ENCODE measurements at regions of chr1 and their contacts with region 1.

Region 1: GRCh38 chr1:200774735-200775444 is 36.2 kb downstream of the CAMSAP2 start:
- DNase-seq: no peak
- ATAC-seq: peak; percentile 86
- H3K4me3 ChIP-seq: peak overlapping the region; percentile 29; the same call in 1 of the 2 replicates
- H3K27ac ChIP-seq: peak overlapping the region; percentile 74
- H3K4me1 ChIP-seq: peaks cover 24% of the 10 kb centered on the region
- H3K27me3 ChIP-seq: no peaks in the 10 kb centered on the region
- CTCF ChIP-seq: no peak
- EP300 ChIP-seq: peak in 1 of 2 experiments; percentile 37; a peak in 1 of 4 replicates
- POLR2A ChIP-seq: no peak
- RAD21 ChIP-seq: no peak

Region 2: GRCh38 chr1:199353906-199354305 is 1421.0 kb before region 1 on chr1:
- CTCF ChIA-PET with region 1: no interaction called
- POLR2A ChIA-PET with region 1: no interaction called
- RAD21 ChIA-PET with region 1: no interaction called
- SMC1A ChIA-PET with region 1: no interaction called
- in situ Hi-C with region 1: no loop called
- intact Hi-C with region 1: no loop called
- DNase-seq: no peak
- ATAC-seq: no peak
- H3K4me3 ChIP-seq: no peak overlapping the region
- H3K27ac ChIP-seq: no peak overlapping the region
- H3K4me1 ChIP-seq: no peaks in the 10 kb centered on the region
- H3K27me3 ChIP-seq: no peaks in the 10 kb centered on the region
- CTCF ChIP-seq: no peak
- EP300 ChIP-seq: no peak
- POLR2A ChIP-seq: no peak
- RAD21 ChIP-seq: no peak

Region 3: GRCh38 chr1:200081151-200081968 is 693.5 kb before region 1 on chr1:
- CTCF ChIA-PET with region 1: no interaction called
- POLR2A ChIA-PET with region 1: no interaction called
- RAD21 ChIA-PET with region 1: no interaction called
- SMC1A ChIA-PET with region 1: no interaction called
- in situ Hi-C with region 1: no loop called
- intact Hi-C with region 1: no loop called
- DNase-seq: no peak
- ATAC-seq: no peak
- H3K4me3 ChIP-seq: no peak overlapping the region
- H3K27ac ChIP-seq: no peak overlapping the region
- H3K4me1 ChIP-seq: no peaks in the 10 kb centered on the region
- H3K27me3 ChIP-seq: peaks cover 2 to 6% of the 10 kb centered on the region in 2 experiments; a peak in 2 of 4 replicates
- CTCF ChIP-seq: no peak
- EP300 ChIP-seq: no peak
- POLR2A ChIP-seq: no peak
- RAD21 ChIP-seq: no peak

Region 4: DNA sequence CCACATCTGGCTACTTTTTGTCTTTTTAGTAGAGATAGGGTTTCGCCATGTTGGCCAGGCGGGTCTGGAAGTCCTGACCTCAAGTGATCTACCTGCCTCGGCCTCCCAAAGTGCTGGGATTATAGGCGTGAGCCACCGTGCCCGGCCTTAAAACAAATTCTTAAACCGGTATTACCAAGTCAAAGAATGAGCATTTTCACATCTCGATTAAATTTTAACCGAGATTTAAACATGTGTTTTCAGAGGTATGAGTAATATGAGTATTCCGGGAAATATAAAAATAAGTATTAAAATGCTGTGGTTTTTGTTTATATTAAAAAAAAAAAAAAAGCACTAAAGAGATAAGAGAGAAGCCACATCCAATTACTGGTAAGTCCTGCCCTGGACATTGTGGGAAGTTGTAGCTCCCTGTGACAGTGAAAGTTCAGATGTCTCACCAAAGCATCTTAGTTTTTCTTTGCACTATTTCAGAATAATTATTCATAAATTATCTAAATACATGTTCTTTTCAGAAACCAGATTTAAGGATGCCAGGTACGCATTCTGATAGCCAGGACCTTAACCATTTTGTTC is 390.0 kb before region 1 on chr1:
- CTCF ChIA-PET with region 1: no interaction called
- POLR2A ChIA-PET with region 1: no interaction called
- RAD21 ChIA-PET with region 1: no interaction called
- SMC1A ChIA-PET with region 1: no interaction called
- in situ Hi-C with region 1: no loop called
- intact Hi-C with region 1: no loop called
- DNase-seq: no peak
- ATAC-seq: peak; percentile 31
- H3K4me3 ChIP-seq: no peak overlapping the region
- H3K27ac ChIP-seq: no peak overlapping the region
- H3K4me1 ChIP-seq: peaks cover 13% of the 10 kb centered on the region; the same call in 1 of the 2 replicates
- H3K27me3 ChIP-seq: no peaks in the 10 kb centered on the region
- CTCF ChIP-seq: no peak
- EP300 ChIP-seq: no peak
- POLR2A ChIP-seq: no peak
- RAD21 ChIP-seq: no peak

Region 5: DNA sequence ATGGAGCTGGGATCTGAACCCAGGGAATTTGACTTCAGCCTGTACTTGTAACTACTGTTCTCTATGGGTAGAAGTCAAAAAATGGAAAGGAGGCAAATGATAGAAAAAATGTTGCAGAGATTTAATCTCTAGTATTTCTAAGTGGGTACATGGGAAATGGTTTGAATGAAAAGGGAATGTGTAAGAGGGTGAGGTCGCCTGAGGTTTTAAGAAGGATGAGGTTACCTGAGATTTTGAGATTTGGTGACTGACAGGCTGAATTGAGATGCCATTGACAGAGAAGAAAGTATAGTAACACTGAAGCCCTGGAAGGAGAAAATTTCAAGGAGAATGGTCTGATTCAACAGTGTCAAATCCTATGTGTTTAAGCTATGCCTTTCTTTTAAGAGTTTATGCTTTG is 30.7 kb before region 1 on chr1:
- CTCF ChIA-PET with region 1: interaction called, 3 read pairs
- POLR2A ChIA-PET with region 1: interaction called, 7 read pairs
- RAD21 ChIA-PET with region 1: interaction called, 8 read pairs
- SMC1A ChIA-PET with region 1: interaction called, 10 read pairs
- in situ Hi-C with region 1: no loop called
- intact Hi-C with region 1: loop called (anchors 5 kb)
- DNase-seq: no peak
- ATAC-seq: no peak
- H3K4me3 ChIP-seq: peak overlapping the region; percentile 22
- H3K27ac ChIP-seq: no peak overlapping the region
- H3K4me1 ChIP-seq: no peaks in the 10 kb centered on the region; the same call in 1 of the 2 replicates
- H3K27me3 ChIP-seq: no peaks in the 10 kb centered on the region
- CTCF ChIP-seq: no peak
- EP300 ChIP-seq: no peak
- POLR2A ChIP-seq: no peak
- RAD21 ChIP-seq: no peak

Region 6: GRCh38 chr1:200786788-200787187 is 11.9 kb after region 1 on chr1:
- CTCF ChIA-PET with region 1: interaction called, 6 read pairs
- POLR2A ChIA-PET with region 1: interaction called, 12 read pairs
- RAD21 ChIA-PET with region 1: interaction called, 3 read pairs
- SMC1A ChIA-PET with region 1: interaction called, 14 read pairs
- in situ Hi-C with region 1: no loop called
- intact Hi-C with region 1: no loop called
- DNase-seq: no peak
- ATAC-seq: no peak
- H3K4me3 ChIP-seq: no peak overlapping the region
- H3K27ac ChIP-seq: no peak overlapping the region
- H3K4me1 ChIP-seq: no peaks in the 10 kb centered on the region; the same call in 1 of the 2 replicates
- H3K27me3 ChIP-seq: no peaks in the 10 kb centered on the region
- CTCF ChIP-seq: no peak
- EP300 ChIP-seq: no peak
- POLR2A ChIP-seq: no peak
- RAD21 ChIP-seq: no peak

Region 7: GRCh38 chr1:200795156-200795555 is 20.3 kb after region 1 on chr1:
- CTCF ChIA-PET with region 1: interaction called, 5 read pairs
- POLR2A ChIA-PET with region 1: no interaction called
- RAD21 ChIA-PET with region 1: interaction called, 3 read pairs
- SMC1A ChIA-PET with region 1: interaction called, 14 read pairs
- in situ Hi-C with region 1: no loop called
- intact Hi-C with region 1: no loop called
- DNase-seq: no peak
- ATAC-seq: no peak
- H3K4me3 ChIP-seq: no peak overlapping the region
- H3K27ac ChIP-seq: no peak overlapping the region
- H3K4me1 ChIP-seq: no peaks in the 10 kb centered on the region; the same call in 1 of the 2 replicates
- H3K27me3 ChIP-seq: no peaks in the 10 kb centered on the region
- CTCF ChIP-seq: no peak
- EP300 ChIP-seq: no peak
- POLR2A ChIP-seq: no peak
- RAD21 ChIP-seq: no peak

Measured in GM12878 (cell line).